ENCODE measurements at regions of chr11 and their contacts with region 1.

Region 1: DNA sequence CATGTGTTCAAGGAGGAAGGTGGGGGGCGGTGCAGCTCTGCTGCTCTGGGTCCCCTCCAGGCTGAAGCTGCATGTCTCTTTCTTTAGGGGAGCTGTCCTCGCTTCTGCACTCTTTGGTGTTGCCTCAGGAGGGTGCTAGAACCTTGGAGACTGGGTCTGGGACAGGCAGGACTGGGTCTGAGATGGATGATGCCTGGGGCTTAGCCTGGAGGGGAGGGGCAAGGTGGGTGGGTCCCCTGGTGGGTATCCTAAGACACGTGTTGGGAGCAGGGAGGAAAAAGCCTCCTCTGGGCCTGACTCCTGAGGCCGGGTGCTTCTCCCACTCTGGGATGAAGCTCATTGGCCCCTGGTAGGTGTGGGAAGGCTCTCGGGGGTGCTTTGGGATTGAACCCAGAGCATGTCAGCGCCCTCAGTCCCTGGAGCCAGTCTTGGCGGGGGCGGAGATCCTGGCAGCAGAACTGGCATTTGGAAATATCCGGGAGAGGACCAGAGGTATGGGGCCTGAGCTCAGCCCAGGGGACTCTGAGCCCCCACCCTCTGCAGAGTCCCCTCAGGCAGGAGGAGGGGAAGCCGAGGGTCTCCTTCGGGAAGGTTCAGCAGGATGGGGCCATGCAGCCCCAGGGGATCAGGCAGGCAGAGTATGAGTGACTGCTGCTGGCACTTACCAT is 6.7 kb upstream of the GSTP1 start:
- DNase-seq: peak in 2 of 3 donors; percentile 27 to 45
- H3K4me3 ChIP-seq: no peak overlapping the region
- H3K27ac ChIP-seq: no peak overlapping the region
- H3K4me1 ChIP-seq: peaks cover 7 to 25% (median 20%) of the 10 kb centered on the region in 4 experiments
- H3K27me3 ChIP-seq: no peaks in the 10 kb centered on the region

Region 2: GRCh38 chr11:67523556-67524479 is 53.1 kb before region 1 on chr11:
- CTCF ChIA-PET with region 1: no interaction called
- POLR2A ChIA-PET with region 1: no interaction called
- DNase-seq: no peak
- H3K4me3 ChIP-seq: no peak overlapping the region
- H3K27ac ChIP-seq: no peak overlapping the region
- H3K4me1 ChIP-seq: no peaks in the 10 kb centered on the region
- H3K27me3 ChIP-seq: no peaks in the 10 kb centered on the region

Region 3: DNA sequence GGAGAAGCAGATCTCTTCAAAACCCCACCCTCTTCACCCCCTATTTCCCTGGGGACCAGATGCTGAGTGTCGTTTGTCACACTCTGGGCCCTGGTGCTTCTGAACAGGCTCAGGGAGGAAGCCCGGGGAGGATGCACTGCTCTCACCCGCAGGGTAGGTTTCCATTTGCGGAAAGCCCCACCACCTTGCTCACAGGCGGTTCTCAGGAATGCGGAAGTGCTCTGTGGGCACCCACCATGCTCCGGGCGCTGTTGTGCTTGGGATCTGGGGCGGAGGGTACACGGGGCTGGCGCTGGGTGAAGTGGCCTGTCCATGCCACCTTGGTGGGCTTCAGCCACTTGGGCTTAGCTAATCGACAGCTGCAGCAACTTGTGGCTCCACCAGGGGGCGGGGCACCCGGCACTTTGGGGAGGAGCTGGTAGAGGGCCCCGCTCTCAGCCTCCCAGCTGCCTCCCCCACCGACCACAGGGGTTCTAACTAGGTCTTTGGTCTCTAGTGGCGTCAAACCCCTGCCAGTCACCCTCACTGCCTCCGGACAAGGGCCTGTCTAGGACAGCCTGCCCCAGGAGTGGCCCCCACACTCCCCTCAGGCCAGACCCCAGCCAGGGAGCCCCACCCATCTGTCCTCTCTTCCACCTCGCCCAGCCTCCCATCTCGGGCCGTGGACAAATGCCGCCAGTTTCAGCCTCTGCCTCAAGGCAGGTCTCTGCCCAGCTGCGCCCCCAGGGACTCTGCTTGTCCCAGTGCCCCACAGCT is 37.2 kb after region 1 on chr11:
- CTCF ChIA-PET with region 1: interaction called, 29 read pairs
- POLR2A ChIA-PET with region 1: interaction called, 3 read pairs
- DNase-seq: peak; percentile 80 to 96 (median 94)
- H3K4me3 ChIP-seq: peak overlapping the region in 5 of 7 experiments; percentile 29 to 71 (median 53)
- H3K27ac ChIP-seq: peak overlapping the region in 1 of 2 experiments; percentile 74
- H3K4me1 ChIP-seq: peaks cover 0 to 33% (median 32%) of the 10 kb centered on the region in 4 experiments
- H3K27me3 ChIP-seq: no peaks in the 10 kb centered on the region

Region 4: GRCh38 chr11:67674442-67674901 is 97.5 kb after region 1 on chr11 and contains the start of gene ALDH3B2:
- CTCF ChIA-PET with region 1: no interaction called
- POLR2A ChIA-PET with region 1: no interaction called
- DNase-seq: no peak
- H3K4me3 ChIP-seq: no peak within 1 kb of the TSS
- H3K27ac ChIP-seq: no peak within 1 kb of the TSS
- H3K4me1 ChIP-seq: no peaks in the 10 kb centered on the region
- H3K27me3 ChIP-seq: no peaks in the 10 kb centered on the region